ENCODE measurements at regions of chr16 and their contacts with region 1.

Region 1: DNA sequence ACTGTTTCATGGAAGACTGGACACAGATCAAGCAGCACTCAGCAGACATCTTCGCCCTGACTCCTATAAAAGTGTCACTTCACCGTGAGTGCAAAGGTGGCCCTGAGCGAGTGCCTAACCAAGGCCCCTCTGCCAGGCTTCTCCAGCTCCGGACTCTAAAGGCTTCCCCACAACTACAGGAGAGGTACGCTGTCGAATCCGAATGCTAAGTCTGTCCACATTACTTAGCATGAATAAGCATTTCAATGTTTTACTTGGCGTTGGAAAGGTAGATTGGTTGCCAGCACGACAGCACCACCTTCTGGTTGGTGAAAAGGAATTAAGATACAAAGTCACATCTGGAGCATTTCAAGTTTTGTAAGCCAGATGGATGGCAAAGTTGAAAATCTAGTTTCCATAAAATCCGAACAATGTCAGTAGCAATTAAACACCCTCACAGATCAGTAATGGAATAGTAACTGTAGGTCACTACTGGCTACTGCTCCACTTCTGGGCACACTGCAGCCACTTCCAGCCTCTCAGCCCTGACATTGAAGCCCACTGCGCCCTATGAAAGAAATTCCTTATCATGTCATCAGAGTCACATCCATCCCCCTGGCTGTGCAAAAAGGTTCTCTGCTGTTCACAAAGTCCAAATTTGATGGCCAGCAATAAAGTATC is 100.9 kb downstream of the PARN start:
- DNase-seq: peak; percentile 63 to 90
- H3K4me3 ChIP-seq: peak overlapping the region; percentile 21 to 45
- H3K27ac ChIP-seq: peak overlapping the region; percentile 36 to 66
- H3K4me1 ChIP-seq: peaks cover 5 to 31% (median 24%) of the 10 kb centered on the region in 4 donors
- H3K27me3 ChIP-seq: no peaks in the 10 kb centered on the region
- CTCF ChIP-seq: peak; percentile 62 to 90

Region 2: DNA sequence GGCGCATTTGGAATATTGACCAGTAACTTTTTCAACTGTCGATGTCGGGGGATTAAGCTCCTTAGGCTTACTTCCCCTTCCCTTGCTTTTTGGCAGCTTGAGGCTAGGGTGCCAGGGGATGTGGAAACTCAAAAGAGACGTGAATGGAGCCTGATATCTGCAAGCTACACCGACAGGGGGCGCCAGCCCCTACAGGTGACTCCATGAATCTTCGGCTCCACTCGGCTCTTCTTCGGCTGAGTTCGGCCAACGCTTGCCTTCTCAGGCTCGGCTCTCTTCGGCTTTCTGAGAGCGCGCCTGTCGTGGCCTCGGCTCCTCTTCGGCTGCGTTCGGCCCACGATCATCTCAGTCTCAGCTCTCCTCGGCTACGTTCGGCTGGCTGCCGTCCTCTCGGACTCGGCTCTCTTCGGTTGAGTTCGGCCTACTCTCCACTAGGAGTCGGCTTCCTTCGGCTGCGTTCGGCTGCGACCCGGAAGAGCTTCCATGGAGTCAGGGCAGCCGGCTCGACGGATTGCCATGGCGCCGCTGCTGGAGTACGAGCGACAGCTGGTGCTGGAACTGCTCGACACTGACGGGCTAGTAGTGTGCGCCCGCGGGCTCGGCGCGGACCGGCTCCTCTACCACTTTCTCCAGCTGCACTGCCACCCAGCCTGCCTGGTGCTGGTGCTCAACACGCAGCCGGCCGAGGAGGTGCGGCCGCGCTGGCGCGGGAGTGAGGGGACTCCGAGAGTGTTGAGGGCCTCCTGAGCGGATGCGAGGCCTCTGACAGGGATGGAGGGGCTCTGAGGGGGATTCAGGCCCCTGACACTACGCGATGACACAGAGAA is 609.2 kb before region 1 on chr16 and contains the start of gene ERCC4:
- intact Hi-C with region 1: loop called (anchors 5 kb)
- DNase-seq: peak; percentile 100
- H3K4me3 ChIP-seq: peak within 1 kb of the TSS; percentile 90 to 96
- H3K27ac ChIP-seq: peak within 1 kb of the TSS; percentile 72 to 91
- H3K4me1 ChIP-seq: peaks cover 0 to 41% (median 17%) of the 10 kb centered on the region in 4 donors
- H3K27me3 ChIP-seq: no peaks in the 10 kb centered on the region
- CTCF ChIP-seq: peak; percentile 81 to 93

Region 3: GRCh38 chr16:14249291-14250032 is 279.7 kb before region 1 on chr16:
- intact Hi-C with region 1: loop called (anchors 5 kb)
- DNase-seq: peak in 1 of 2 donors; percentile 48
- H3K4me3 ChIP-seq: no peak overlapping the region
- H3K27ac ChIP-seq: no peak overlapping the region
- H3K4me1 ChIP-seq: no peaks in the 10 kb centered on the region
- H3K27me3 ChIP-seq: no peaks in the 10 kb centered on the region
- CTCF ChIP-seq: peak; percentile 71 to 79

Region 4: DNA sequence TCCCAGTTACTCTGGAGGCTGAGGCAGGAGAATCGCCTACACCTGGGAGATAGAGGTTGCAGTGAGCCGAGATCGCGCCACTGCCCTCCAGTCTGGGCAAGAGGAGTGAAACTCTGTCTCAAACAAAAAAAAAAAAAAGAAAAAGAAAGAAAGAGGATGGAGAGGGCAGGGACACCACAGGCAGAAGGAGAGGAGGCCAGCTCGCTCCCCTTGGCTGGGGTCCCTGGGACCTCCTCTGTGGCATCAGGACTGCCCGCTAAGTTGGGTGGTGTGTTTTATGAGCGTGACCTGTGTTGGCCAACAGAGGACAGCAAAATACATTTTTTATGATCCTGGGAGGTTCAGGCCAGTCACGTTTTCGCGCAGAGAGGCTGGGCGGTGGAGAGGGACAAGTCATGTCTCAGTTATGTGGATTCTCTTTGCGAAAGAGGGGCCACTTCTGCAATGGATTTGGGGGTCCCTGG is 228.4 kb before region 1 on chr16:
- intact Hi-C with region 1: loop called (anchors 1 kb)
- DNase-seq: peak; percentile 87 to 91
- H3K4me3 ChIP-seq: peak overlapping the region; percentile 82 to 100
- H3K27ac ChIP-seq: peak overlapping the region; percentile 87 to 91
- H3K4me1 ChIP-seq: peaks cover 0 to 26% (median 16%) of the 10 kb centered on the region in 4 donors
- H3K27me3 ChIP-seq: no peaks in the 10 kb centered on the region
- CTCF ChIP-seq: peak; percentile 61 to 77